Mucosa of descending colon (tissue), 3 donors: ENCODE measurements at regions of chr22 and their contacts with region 1.

Region 1: DNA sequence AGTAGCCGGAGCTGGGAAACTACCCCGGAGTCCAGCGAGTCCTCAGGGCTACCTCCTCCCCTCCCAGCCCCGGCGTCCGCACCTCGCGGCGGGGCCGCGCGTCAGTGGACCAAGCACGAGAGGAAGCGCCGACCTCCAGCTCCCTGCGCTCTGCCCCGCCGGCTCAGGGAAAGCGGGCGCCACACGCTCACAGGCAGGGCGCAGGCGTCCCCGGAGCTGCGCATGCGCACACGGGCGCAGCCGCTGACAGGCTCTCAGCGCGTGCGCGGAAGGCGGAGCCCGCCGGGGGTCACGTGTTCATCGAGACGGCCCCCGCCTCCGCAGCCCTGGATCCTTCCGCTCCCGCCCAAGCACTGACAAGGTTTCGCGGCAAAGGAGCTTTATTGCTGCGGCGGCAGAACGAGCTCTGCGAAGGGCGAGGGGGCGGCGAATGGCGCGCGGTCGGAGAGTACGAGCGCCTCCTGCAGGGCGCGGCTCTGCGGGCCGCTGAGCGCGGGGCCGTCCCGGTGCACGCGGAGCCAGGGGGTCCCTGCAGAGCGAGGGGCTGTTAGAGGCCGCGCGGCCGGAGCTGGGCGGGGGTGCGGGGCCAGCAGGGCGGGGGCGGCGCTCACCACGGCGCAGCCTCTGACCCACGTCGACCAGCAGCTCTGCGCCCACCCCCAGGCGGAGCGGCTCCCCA is at the start of gene SCO2:
- DNase-seq: peak; percentile 98
- ATAC-seq: peak; percentile 60
- H3K4me3 ChIP-seq: peak within 1 kb of the TSS; percentile 46
- H3K4me1 ChIP-seq: peaks cover 44% of the 10 kb centered on the region
- CTCF ChIP-seq: peak; percentile 67
- total RNA-seq, gene SCO2: 5.4 to 14.6 TPM in 2 of 3 donors, not detected in the other

Region 2: GRCh38 chr22:50620593-50621355 is 95.2 kb after region 1 on chr22:
- intact Hi-C with region 1: loop called in 1 of 2 experiments (anchors 5 kb)
- DNase-seq: peak; percentile 58 to 95 (median 77)
- ATAC-seq: peak; percentile 10
- H3K4me3 ChIP-seq: no peak overlapping the region
- H3K4me1 ChIP-seq: peaks cover 18% of the 10 kb centered on the region
- CTCF ChIP-seq: peak; percentile 43